ENCODE measurements at regions of chr6 and their contacts with region 1.

Region 1: DNA sequence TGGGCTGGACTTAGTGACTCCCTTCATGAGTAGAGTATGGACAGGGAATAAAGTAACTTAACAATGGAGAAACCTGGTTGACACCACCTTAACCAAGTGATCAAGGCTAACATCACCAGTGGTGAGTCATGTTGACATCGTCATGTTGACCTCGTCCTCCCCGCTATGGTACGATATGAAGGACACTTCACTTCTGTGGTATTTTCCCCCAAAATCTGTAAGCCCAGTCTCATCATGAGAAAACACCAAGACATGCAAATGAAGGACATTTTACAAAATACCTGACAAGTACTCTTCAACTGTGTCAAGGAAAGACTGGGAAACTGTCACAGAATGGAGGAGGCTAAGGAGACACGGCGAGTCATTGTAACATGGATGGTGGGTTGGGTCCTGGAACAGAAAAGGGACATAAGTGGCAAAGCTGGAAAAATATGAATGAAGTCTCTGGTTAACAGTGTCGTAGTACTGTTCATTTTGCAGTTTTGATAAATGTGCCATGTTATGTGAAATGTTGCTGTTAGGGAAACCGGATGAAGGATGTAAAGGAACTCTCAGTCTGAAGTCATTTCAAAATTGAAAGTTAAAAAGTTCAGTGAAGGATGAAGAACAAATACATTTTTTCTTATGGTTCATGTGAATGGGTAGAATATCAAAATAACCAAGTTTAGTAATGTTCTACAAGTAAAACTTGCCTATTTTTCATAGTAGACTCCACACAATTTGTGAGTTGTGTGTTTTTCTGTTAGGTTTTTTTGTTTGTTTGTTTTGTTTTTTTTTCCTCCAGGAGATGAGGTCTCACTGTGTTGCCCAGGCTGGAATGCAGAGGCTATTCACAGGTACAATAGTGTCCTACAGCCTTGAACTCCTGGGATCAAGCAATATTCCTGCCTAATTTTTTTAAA is 247.5 kb downstream of the TMEM242 start:
- DNase-seq: no peak
- H3K4me3 ChIP-seq: no peak overlapping the region
- H3K27ac ChIP-seq: no peak overlapping the region
- H3K4me1 ChIP-seq: peaks cover 0 to 6% (median 2%) of the 10 kb centered on the region in 4 donors
- H3K27me3 ChIP-seq: no peaks in the 10 kb centered on the region
- CTCF ChIP-seq: no peak
- EP300 ChIP-seq: no peak
- POLR2A ChIP-seq: no peak

Region 2: GRCh38 chr6:155909710-155910109 is 1166.1 kb before region 1 on chr6:
- in situ Hi-C with region 1: no loop called
- intact Hi-C with region 1: loop called (anchors 5 kb)
- DNase-seq: no peak
- H3K4me3 ChIP-seq: no peak overlapping the region
- H3K27ac ChIP-seq: no peak overlapping the region
- H3K4me1 ChIP-seq: no peaks in the 10 kb centered on the region
- H3K27me3 ChIP-seq: no peaks in the 10 kb centered on the region
- CTCF ChIP-seq: no peak
- EP300 ChIP-seq: no peak
- POLR2A ChIP-seq: no peak